Caco-2 (cell line): ENCODE measurements at regions of chr6 and their contacts with region 1.

Region 1: GRCh38 chr6:1396952-1397868 is 7.8 kb downstream of the FOXF2 start:
- DNase-seq: peak; percentile 63 to 79
- H3K4me3 ChIP-seq: no peak overlapping the region
- H3K4me3 Mint-ChIP-seq: no peak overlapping the region
- H3K27ac Mint-ChIP-seq: no peak overlapping the region
- H3K4me1 ChIP-seq: no peaks in the 10 kb centered on the region
- H3K4me1 Mint-ChIP-seq: peaks cover 5% of the 10 kb centered on the region
- H3K27me3 ChIP-seq: no peaks in the 10 kb centered on the region
- H3K27me3 Mint-ChIP-seq: peaks cover 10% of the 10 kb centered on the region
- CTCF ChIP-seq: peak; percentile 93 to 97

Region 2: DNA sequence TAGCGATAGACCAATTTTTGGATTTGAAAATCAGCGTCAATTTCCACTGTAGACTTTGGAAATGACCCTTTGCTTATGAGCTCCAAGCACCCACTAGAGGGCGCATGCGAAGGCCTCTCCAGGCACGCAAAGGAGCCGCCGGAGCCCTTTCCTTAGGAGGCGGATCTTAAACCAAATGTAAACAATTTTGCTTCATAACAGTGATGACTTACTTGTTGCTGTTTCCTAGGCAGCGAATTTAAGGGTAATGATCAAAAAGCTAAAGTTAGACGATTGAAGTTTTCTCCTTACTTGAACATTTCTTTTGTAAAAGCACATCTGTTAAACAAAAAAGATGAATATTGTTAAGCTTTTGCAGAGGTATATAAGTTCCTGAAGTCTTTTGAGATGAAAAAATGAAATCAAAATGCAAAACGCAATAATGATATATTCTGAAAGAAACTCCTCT is 675.1 kb before region 1 on chr6:
- CTCF ChIA-PET with region 1: no interaction called
- POLR2A ChIA-PET with region 1: no interaction called
- intact Hi-C with region 1: loop called (anchors 10 kb)
- DNase-seq: peak; percentile 64 to 74
- H3K4me3 ChIP-seq: no peak overlapping the region
- H3K4me3 Mint-ChIP-seq: no peak overlapping the region
- H3K27ac Mint-ChIP-seq: no peak overlapping the region
- H3K4me1 ChIP-seq: no peaks in the 10 kb centered on the region
- H3K4me1 Mint-ChIP-seq: no peaks in the 10 kb centered on the region
- H3K27me3 ChIP-seq: no peaks in the 10 kb centered on the region
- H3K27me3 Mint-ChIP-seq: peaks cover 30% of the 10 kb centered on the region
- CTCF ChIP-seq: peak; percentile 65 to 89

Region 3: GRCh38 chr6:797479-798077 is 599.6 kb before region 1 on chr6:
- CTCF ChIA-PET with region 1: no interaction called
- POLR2A ChIA-PET with region 1: no interaction called
- intact Hi-C with region 1: loop called (anchors 1 kb)
- DNase-seq: peak in 1 of 2 experiments; percentile 60
- H3K4me3 ChIP-seq: no peak overlapping the region
- H3K4me3 Mint-ChIP-seq: no peak overlapping the region
- H3K27ac Mint-ChIP-seq: no peak overlapping the region
- H3K4me1 ChIP-seq: no peaks in the 10 kb centered on the region
- H3K4me1 Mint-ChIP-seq: no peaks in the 10 kb centered on the region
- H3K27me3 ChIP-seq: no peaks in the 10 kb centered on the region
- H3K27me3 Mint-ChIP-seq: no peaks in the 10 kb centered on the region
- CTCF ChIP-seq: peak; percentile 73 to 74

Region 4: GRCh38 chr6:1363729-1364572 is 33.3 kb before region 1 on chr6:
- CTCF ChIA-PET with region 1: interaction called, 8 read pairs
- POLR2A ChIA-PET with region 1: no interaction called
- intact Hi-C with region 1: loop called (anchors 1 kb)
- DNase-seq: peak in 1 of 2 experiments; percentile 57
- H3K4me3 ChIP-seq: no peak overlapping the region
- H3K4me3 Mint-ChIP-seq: no peak overlapping the region
- H3K27ac Mint-ChIP-seq: no peak overlapping the region
- H3K4me1 ChIP-seq: no peaks in the 10 kb centered on the region
- H3K4me1 Mint-ChIP-seq: no peaks in the 10 kb centered on the region
- H3K27me3 ChIP-seq: no peaks in the 10 kb centered on the region
- H3K27me3 Mint-ChIP-seq: peaks cover 5% of the 10 kb centered on the region
- CTCF ChIP-seq: peak; percentile 42 to 55

Region 5: GRCh38 chr6:1381481-1382330 is 15.5 kb before region 1 on chr6:
- CTCF ChIA-PET with region 1: interaction called, 10 read pairs
- POLR2A ChIA-PET with region 1: no interaction called
- intact Hi-C with region 1: no loop called
- DNase-seq: peak in 1 of 2 experiments; percentile 88
- H3K4me3 ChIP-seq: peak overlapping the region; percentile 32
- H3K4me3 Mint-ChIP-seq: peak overlapping the region; percentile 21
- H3K27ac Mint-ChIP-seq: no peak overlapping the region
- H3K4me1 ChIP-seq: peaks cover 17% of the 10 kb centered on the region
- H3K4me1 Mint-ChIP-seq: no peaks in the 10 kb centered on the region
- H3K27me3 ChIP-seq: peaks cover 5% of the 10 kb centered on the region
- H3K27me3 Mint-ChIP-seq: peaks cover 28% of the 10 kb centered on the region
- CTCF ChIP-seq: peak; percentile 72 to 90

Region 6: DNA sequence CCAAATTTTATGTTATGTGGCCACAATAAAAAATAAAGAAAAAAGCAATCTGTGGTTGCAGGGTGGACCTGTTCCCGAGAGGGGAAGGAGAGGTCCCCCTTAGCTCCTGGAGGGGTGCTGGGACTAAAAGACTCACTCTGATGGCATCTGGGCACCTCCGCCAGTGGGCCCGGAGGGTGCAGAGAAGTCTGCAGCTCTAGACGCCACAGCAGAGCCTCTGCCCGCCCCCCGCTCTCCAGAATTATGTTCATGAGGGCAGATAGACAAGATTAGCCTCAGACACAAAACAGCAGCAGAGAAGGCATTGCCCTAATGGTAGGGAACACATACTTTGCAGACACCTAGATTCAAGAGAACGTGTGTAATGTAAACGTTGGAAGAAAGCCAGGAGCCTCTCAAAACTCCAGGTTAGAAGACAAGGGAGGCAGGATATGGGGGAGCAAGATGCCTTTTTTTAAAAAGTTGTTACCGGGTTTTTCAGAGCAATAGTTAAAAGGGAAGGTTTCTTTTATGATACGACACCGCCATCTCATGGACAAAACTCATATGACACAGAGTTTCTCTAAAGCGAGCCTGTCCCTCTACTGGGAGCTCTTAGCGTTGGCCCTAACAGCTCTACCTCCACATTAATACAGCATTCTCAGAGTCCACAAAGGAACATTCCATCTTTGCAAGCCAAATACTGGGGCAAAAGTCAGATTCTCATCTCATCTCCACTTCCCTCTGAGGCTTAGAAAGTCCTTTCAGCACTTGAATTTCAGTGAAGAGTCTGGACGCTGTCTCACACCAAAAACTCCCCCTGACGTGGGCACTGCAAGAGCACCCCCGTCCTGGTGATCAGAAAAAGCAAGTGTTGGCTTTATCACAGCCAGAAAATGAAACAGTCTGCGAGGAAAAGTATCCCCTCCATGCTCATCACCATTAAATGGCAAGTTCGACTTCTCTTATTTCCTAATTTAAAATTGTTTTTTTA is 39.4 kb after region 1 on chr6:
- CTCF ChIA-PET with region 1: interaction called, 11 read pairs
- POLR2A ChIA-PET with region 1: no interaction called
- intact Hi-C with region 1: loop called (anchors 5 kb)
- DNase-seq: peak; percentile 50 to 75
- H3K4me3 ChIP-seq: no peak overlapping the region
- H3K4me3 Mint-ChIP-seq: no peak overlapping the region
- H3K27ac Mint-ChIP-seq: no peak overlapping the region
- H3K4me1 ChIP-seq: no peaks in the 10 kb centered on the region
- H3K4me1 Mint-ChIP-seq: peaks cover 14% of the 10 kb centered on the region
- H3K27me3 ChIP-seq: no peaks in the 10 kb centered on the region; the same call in 1 of the 2 replicates
- H3K27me3 Mint-ChIP-seq: peaks cover 19% of the 10 kb centered on the region
- CTCF ChIP-seq: peak; percentile 76 to 84

Region 7: GRCh38 chr6:1745814-1746213 is 348.6 kb after region 1 on chr6:
- CTCF ChIA-PET with region 1: no interaction called
- POLR2A ChIA-PET with region 1: no interaction called
- intact Hi-C with region 1: no loop called
- DNase-seq: no peak
- H3K4me3 ChIP-seq: no peak overlapping the region
- H3K4me3 Mint-ChIP-seq: no peak overlapping the region
- H3K27ac Mint-ChIP-seq: no peak overlapping the region
- H3K4me1 ChIP-seq: no peaks in the 10 kb centered on the region
- H3K4me1 Mint-ChIP-seq: no peaks in the 10 kb centered on the region
- H3K27me3 ChIP-seq: no peaks in the 10 kb centered on the region
- H3K27me3 Mint-ChIP-seq: no peaks in the 10 kb centered on the region
- CTCF ChIP-seq: no peak